HepG2 (cell line): ENCODE measurements at regions of chr21 and their contacts with region 1.

Region 1: GRCh38 chr21:33127154-33127893 is 57.4 kb downstream of the OLIG1 start:
- DNase-seq: peak; percentile 56
- ATAC-seq: peak; percentile 86
- H3K4me3 ChIP-seq: peak overlapping the region in 2 of 3 experiments; percentile 37 to 55; a peak in 4 of 6 replicates
- H3K27ac ChIP-seq: no peak overlapping the region
- H3K4me1 ChIP-seq: peaks cover 21% of the 10 kb centered on the region
- H3K27me3 ChIP-seq: peaks cover 4 to 23% of the 10 kb centered on the region in 2 experiments; a peak in 3 of 5 replicates
- CTCF ChIP-seq: peak; percentile 78
- EP300 ChIP-seq: no peak
- POLR2A ChIP-seq: no peak
- RAD21 ChIP-seq: peak; percentile 67

Region 2: DNA sequence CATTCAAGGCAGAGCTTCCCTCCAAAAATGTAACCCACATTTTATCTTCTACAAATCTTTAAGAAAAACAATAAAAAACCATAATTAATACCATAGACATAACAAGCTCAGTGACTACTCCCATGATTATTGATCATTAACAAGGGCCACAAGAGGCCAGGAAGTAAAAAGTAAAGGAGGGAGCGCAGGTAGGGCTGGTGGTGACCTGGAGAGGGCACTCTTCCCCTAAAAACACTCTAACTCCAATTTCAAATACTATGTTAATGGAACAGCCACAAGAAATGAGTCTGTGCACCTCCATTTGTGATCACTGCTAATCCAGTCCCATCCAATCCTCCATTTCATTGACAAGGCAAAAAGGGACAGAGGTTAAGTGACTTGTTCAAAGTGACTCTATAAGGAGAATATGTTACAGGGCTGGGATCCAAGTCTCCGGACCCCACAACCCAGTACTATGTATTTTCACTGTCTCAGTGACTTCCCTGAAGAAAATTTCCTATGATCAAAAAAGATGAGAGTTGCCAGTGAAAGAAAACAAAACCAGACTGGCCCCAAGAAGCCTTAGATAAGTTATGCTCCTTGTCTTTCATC is 473.9 kb before region 1 on chr21:
- CTCF ChIA-PET with region 1: no interaction called
- POLR2A ChIA-PET with region 1: no interaction called
- in situ Hi-C with region 1: loop called (anchors 25 kb)
- intact Hi-C with region 1: loop called (anchors 10 kb)
- DNase-seq: peak; percentile 37
- ATAC-seq: peak; percentile 95
- H3K4me3 ChIP-seq: no peak overlapping the region
- H3K27ac ChIP-seq: no peak overlapping the region
- H3K4me1 ChIP-seq: peaks cover 9% of the 10 kb centered on the region
- H3K27me3 ChIP-seq: no peaks in the 10 kb centered on the region
- CTCF ChIP-seq: peak; percentile 83
- EP300 ChIP-seq: no peak
- POLR2A ChIP-seq: no peak
- RAD21 ChIP-seq: peak; percentile 59; the same call in 1 of the 2 replicates

Region 3: GRCh38 chr21:32940079-32941014 is 187.0 kb before region 1 on chr21:
- CTCF ChIA-PET with region 1: interaction called, 10 read pairs
- POLR2A ChIA-PET with region 1: no interaction called
- in situ Hi-C with region 1: no loop called
- intact Hi-C with region 1: loop called (anchors 1 kb)
- DNase-seq: peak; percentile 39
- ATAC-seq: peak; percentile 48; the same call in 1 of the 3 replicates
- H3K4me3 ChIP-seq: no peak overlapping the region
- H3K27ac ChIP-seq: no peak overlapping the region
- H3K4me1 ChIP-seq: no peaks in the 10 kb centered on the region
- H3K27me3 ChIP-seq: peaks cover 1 to 22% of the 10 kb centered on the region in 2 experiments
- CTCF ChIP-seq: peak; percentile 68
- EP300 ChIP-seq: no peak
- POLR2A ChIP-seq: no peak
- RAD21 ChIP-seq: no peak

Region 4: DNA sequence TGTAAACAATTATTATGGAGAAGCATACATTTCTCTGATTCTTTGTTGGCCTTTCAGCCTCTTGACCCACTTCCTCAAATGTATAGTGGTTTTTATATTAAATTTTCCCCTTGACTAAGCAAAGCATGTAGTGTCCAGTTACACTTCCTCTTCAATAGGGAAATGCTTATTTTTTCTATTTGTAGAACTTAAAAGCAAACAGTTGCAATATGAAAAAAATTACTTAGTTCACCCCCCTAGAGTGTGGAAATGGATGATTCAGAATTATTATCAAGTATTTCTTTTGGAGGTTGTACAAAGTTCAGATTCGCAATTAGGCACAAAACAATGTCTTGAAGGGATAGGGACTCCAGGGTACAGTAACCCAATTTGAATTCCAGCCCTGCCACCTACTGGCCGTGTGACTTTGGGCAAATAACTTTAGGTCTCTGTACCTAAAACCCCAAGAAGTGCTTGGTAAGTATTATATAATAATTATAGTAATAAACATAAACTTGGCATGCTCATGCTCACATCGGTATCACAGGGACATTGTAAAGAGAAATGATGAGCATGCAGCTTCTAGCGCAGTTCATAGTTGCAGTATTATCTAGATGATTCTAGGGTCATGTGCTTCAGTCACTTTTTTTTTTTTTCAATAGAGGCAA is 247.2 kb after region 1 on chr21:
- CTCF ChIA-PET with region 1: no interaction called
- POLR2A ChIA-PET with region 1: no interaction called
- in situ Hi-C with region 1: no loop called
- intact Hi-C with region 1: loop called (anchors 10 kb)
- DNase-seq: peak; percentile 39
- ATAC-seq: peak; percentile 80
- H3K4me3 ChIP-seq: no peak overlapping the region
- H3K27ac ChIP-seq: no peak overlapping the region
- H3K4me1 ChIP-seq: peaks cover 14% of the 10 kb centered on the region
- H3K27me3 ChIP-seq: no peaks in the 10 kb centered on the region
- CTCF ChIP-seq: peak; percentile 71
- EP300 ChIP-seq: no peak
- POLR2A ChIP-seq: no peak
- RAD21 ChIP-seq: no peak